ENCODE measurements at regions of chr2 and their contacts with region 1.

Region 1: GRCh38 chr2:46351750-46352138 is 54.5 kb downstream of the EPAS1 start:
- DNase-seq: no peak
- H3K4me3 ChIP-seq: no peak overlapping the region
- H3K27ac ChIP-seq: peak overlapping the region; percentile 44
- H3K4me1 ChIP-seq: peaks cover 23% of the 10 kb centered on the region
- H3K27me3 ChIP-seq: no peaks in the 10 kb centered on the region
- CTCF ChIP-seq: no peak
- POLR2A ChIP-seq: no peak

Region 2: DNA sequence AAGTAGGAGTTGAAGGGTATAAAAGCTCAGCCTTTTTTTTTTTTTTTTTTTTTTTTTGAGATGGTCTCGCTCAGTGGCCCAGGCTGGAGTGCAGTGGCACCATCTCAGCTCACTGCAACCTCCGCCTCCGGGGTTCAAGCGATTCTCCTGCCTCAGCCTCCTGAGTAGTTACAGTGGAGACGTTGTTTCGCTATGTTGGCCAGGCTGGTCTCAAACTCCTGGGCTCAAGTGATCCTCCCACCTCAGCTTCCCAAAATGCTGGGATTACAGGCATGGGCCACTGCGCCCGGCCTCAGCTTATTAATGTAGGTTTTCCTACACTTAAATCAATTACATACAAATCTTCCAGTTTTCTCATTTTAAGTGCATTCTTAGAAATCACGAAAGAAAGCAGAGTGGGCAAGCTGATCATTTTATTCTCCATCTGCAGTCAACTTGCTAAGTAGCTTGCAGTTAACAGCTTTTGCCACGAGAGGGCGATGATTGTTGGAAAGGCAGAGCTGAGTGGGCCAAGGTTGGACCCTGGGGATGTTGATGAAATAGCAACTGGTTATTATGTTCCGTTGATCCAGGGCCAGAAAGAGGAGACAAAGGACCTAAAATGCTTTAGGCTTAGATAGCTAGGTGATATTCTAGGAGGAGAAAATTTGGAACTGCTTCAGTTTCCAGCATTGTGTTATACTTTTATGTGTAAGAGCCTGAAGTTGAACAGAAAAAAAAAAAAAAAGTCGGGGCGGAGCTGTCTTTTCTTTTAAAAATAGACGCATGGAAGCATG is 288.9 kb before region 1 on chr2:
- intact Hi-C with region 1: loop called (anchors 10 kb)
- DNase-seq: no peak
- H3K4me3 ChIP-seq: no peak overlapping the region
- H3K27ac ChIP-seq: peak overlapping the region; percentile 9
- H3K4me1 ChIP-seq: peaks cover 20% of the 10 kb centered on the region
- H3K27me3 ChIP-seq: no peaks in the 10 kb centered on the region
- CTCF ChIP-seq: peak; percentile 58 to 93 (median 85)
- POLR2A ChIP-seq: no peak

Region 3: DNA sequence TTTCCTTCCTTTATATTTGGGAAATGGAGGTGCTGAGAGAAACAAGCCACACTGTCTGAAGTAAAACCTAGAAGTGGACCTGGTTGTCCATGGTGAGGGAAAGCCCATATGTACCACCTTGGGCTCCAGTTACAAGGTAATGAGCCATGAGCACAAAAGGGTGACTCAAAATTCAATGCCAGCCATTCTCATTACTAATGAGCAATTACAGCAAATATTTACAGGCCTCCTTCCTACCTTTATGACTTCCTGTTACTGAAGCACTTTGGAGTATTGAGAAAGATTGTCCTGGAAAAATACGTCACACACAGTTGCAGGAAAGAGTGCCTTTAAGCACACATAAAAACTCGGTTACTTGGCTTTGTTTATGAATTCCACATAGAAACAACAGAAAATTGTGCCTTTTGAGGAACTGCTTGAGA is 45.4 kb before region 1 on chr2:
- intact Hi-C with region 1: loop called (anchors 5 kb)
- DNase-seq: no peak
- H3K4me3 ChIP-seq: no peak overlapping the region
- H3K27ac ChIP-seq: peak overlapping the region; percentile 25
- H3K4me1 ChIP-seq: peaks cover 79% of the 10 kb centered on the region
- H3K27me3 ChIP-seq: no peaks in the 10 kb centered on the region
- CTCF ChIP-seq: no peak
- POLR2A ChIP-seq: no peak